Naive thymus-derived CD8-positive, alpha-beta T cell (primary cell): ENCODE measurements at regions of chr6 and their contacts with region 1.

Region 1: DNA sequence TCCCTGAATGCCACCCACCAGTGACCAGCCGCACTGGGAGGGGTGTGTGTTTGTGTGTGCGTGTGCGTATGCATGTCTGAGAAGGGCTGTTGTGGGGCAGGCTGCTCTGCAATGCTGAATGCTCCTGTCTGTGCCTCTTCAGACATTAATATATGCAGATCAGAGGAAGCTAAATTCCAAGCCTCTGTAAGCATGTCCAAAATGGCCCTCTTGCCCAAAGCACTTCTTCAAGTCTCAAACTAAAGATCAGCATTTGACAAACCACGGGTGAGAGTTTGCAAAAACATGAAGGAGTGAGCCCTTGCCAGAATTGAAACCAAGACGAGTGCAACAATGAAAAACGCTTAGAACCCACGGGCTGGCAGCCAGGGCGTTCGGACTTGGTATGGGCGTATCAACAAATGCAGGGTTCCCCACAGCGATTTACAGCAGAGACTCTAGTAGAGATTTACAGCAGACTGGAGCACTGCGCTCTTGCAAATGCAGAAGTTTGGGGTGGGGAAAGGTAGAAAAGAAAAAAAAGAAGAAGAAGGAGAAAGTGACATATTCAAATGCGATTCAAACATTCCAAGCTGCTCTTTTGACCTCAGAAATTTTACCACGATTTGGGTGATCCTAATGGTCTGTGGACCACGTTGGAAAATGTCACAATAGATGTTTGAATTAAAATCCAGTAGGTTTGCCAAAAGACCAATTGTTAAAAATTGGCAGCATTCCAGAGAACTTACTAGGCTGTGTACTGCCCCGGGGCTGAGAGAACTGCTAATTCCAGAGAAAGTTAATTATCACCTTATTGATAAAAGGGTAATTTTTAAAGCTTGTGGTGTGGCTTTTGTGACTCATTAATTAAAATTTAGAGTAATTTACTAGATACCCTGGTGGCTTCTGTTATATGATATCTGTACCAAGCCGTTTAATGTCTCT is 3.5 kb downstream of the SCML4 start:
- DNase-seq: peak in 9 of 10 donors; percentile 36 to 76 (median 45)
- ATAC-seq: peak in 1 of 2 donors; percentile 22
- H3K4me3 Mint-ChIP-seq: peak overlapping the region; percentile 85 to 99 (median 96)
- H3K27ac Mint-ChIP-seq: peak overlapping the region; percentile 97 to 100 (median 99)
- H3K4me1 Mint-ChIP-seq: peaks cover 37 to 91% (median 79%) of the 10 kb centered on the region in 4 donors
- H3K27me3 Mint-ChIP-seq: no peaks in the 10 kb centered on the region

Region 2: DNA sequence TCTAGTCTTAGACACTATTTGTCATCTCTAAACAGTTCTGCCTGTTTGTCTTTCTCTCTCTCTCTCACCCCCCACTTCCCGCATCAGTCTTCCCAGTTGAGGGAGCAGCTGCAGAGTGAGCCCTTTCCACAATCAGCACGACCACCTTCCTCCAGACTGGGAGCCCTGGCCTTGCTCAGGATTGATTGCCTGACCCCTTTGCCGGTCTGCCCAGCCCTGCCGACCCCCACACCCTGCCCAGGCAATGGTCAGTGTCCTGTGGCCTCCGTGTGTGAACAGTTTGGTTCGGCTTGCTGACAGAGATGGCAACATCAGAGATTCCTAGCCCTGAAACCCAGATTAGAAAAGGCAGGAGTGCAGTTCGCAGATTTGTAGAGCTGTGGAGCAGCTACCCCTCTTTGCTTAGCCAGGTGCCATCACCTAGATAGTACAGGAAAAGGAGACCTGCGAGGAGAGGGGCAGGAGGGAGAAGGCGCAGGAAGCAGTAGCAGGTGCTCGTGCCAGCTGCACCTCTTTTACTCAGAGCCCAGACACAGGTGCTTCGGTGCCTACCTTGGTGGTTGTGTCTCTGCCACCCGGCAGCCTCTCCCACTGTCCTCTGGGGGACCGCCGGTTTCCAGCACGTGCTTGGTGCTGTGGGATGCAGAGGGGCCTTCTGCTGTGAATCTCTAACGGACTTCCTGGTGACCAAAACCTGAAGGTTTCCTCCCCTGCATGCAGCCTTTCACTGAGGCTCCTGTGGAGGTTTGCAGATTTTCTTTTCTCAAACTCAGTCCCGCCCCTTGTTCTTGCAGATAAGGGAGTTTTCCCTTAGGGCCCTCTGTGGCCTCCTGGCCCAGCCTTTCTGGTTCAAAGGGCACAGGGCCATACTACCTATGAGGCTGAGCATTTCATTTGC is 88.9 kb before region 1 on chr6:
- POLR2A ChIA-PET with region 1: interaction called, 75 read pairs
- DNase-seq: peak in 5 of 10 donors; percentile 23 to 58 (median 33)
- ATAC-seq: peak; percentile 43 to 50
- H3K4me3 Mint-ChIP-seq: peak overlapping the region; percentile 87 to 99 (median 94)
- H3K27ac Mint-ChIP-seq: peak overlapping the region; percentile 91 to 97 (median 96)
- H3K4me1 Mint-ChIP-seq: peaks cover 45 to 96% (median 87%) of the 10 kb centered on the region in 4 donors
- H3K27me3 Mint-ChIP-seq: no peaks in the 10 kb centered on the region

Region 3: GRCh38 chr6:107756660-107757355 is 63.8 kb before region 1 on chr6:
- POLR2A ChIA-PET with region 1: interaction called, 10 read pairs
- DNase-seq: no peak
- ATAC-seq: peak; percentile 36 to 39
- H3K4me3 Mint-ChIP-seq: peak overlapping the region in 5 of 10 donors; percentile 6 to 28 (median 13)
- H3K27ac Mint-ChIP-seq: peak overlapping the region; percentile 38 to 86 (median 78)
- H3K4me1 Mint-ChIP-seq: peaks cover 33 to 78% (median 57%) of the 10 kb centered on the region in 4 donors
- H3K27me3 Mint-ChIP-seq: no peaks in the 10 kb centered on the region

Region 4: GRCh38 chr6:107793191-107793590 is 27.4 kb before region 1 on chr6:
- POLR2A ChIA-PET with region 1: interaction called, 21 read pairs
- DNase-seq: peak in 2 of 10 donors; percentile 40 to 46
- ATAC-seq: peak; percentile 55 to 78
- H3K4me3 Mint-ChIP-seq: peak overlapping the region; percentile 25 to 78 (median 55)
- H3K27ac Mint-ChIP-seq: peak overlapping the region; percentile 81 to 98 (median 92)
- H3K4me1 Mint-ChIP-seq: peaks cover 53 to 91% (median 84%) of the 10 kb centered on the region in 4 donors
- H3K27me3 Mint-ChIP-seq: no peaks in the 10 kb centered on the region

Region 5: DNA sequence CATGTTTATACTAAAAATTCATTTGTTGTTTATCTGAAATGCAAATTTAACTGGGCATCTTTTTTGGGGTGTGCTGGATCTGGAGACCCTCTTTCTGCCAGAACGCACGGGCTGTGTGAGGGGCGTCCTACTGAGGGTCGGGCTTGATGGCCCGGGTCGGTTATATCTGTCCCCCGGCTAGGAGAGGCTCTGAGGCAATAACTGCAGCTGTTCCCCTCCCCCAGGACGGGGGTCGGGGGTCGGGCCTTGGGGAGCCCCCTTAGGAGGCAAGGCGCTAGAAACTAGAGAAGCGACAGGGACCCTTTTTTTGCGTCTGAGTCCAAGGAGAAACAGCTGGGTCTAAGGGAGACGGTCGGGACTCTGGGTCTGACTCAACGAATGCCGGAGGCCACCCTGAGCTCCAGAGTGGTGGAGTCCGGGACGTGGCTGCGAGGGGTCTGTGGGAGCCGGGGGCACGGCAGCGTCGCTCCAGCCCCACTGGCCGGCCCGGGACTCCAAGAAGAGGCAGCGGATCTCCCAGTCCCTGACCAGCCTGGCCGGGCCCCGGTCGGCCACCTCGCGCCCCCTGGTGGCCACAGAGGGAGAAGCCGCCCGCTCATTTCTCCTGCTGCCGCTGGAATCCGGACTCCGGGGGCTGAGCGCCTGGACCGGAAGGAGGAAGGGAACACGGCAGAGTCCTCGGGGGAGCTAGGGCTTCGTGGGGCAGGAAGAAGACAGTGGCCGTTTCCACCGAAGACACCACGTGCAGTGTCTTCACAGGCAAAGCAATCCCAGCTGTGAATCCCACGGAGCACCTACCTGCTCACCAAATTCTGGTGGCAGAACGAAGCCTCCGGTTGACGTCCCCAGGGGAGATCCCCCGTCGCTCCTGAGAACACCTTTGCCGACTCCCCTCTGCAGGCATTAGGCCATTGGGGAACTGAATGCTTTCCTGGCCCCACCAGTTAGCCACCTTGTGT is 27.5 kb after region 1 on chr6:
- POLR2A ChIA-PET with region 1: interaction called, 44 read pairs
- DNase-seq: peak; percentile 59 to 91 (median 79)
- ATAC-seq: peak; percentile 85 to 86
- H3K4me3 Mint-ChIP-seq: peak overlapping the region; percentile 77 to 93 (median 86)
- H3K27ac Mint-ChIP-seq: peak overlapping the region; percentile 81 to 95 (median 92)
- H3K4me1 Mint-ChIP-seq: peaks cover 11 to 32% (median 22%) of the 10 kb centered on the region in 4 donors
- H3K27me3 Mint-ChIP-seq: no peaks in the 10 kb centered on the region